ENCODE measurements at regions of chr9 and their contacts with region 1.

Region 1: GRCh38 chr9:108239696-108240321 is 616.0 kb downstream of the ACTL7B start:
- DNase-seq: no peak
- H3K4me3 ChIP-seq: no peak overlapping the region
- H3K27ac ChIP-seq: no peak overlapping the region
- H3K4me1 ChIP-seq: no peaks in the 10 kb centered on the region
- H3K27me3 ChIP-seq: no peaks in the 10 kb centered on the region
- CTCF ChIP-seq: no peak
- EP300 ChIP-seq: no peak
- POLR2A ChIP-seq: no peak

Region 2: GRCh38 chr9:107693625-107694326 is 546.0 kb before region 1 on chr9:
- in situ Hi-C with region 1: loop called in 1 of 4 experiments (anchors 10 kb)
- intact Hi-C with region 1: no loop called
- DNase-seq: no peak
- H3K4me3 ChIP-seq: no peak overlapping the region
- H3K27ac ChIP-seq: no peak overlapping the region
- H3K4me1 ChIP-seq: no peaks in the 10 kb centered on the region
- H3K27me3 ChIP-seq: no peaks in the 10 kb centered on the region
- CTCF ChIP-seq: no peak
- EP300 ChIP-seq: no peak
- POLR2A ChIP-seq: no peak

Region 3: DNA sequence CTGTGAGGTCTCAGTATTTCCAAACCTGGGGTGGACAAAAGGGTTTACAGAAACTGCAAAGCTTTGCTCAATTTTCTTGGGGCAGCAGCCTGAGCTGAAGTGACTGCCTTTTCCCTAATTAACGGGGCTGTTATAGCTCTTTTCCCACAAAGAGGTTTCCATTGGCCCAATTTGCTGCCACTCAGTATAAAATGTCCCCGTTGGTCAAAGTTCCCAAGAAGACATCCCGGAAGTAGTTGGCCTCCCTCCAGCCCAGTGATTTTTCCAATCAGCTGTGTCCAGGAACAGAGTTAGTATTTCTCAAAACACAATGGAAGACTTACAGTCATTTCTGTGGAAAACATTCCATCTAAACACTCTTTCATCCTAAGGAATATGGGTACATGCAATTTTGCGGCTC is 27.6 kb before region 1 on chr9:
- in situ Hi-C with region 1: no loop called
- intact Hi-C with region 1: no loop called
- DNase-seq: peak; percentile 9
- H3K4me3 ChIP-seq: no peak overlapping the region
- H3K27ac ChIP-seq: no peak overlapping the region
- H3K4me1 ChIP-seq: peaks cover 4 to 41% (median 24%) of the 10 kb centered on the region in 4 donors
- H3K27me3 ChIP-seq: no peaks in the 10 kb centered on the region
- CTCF ChIP-seq: no peak
- EP300 ChIP-seq: no peak
- POLR2A ChIP-seq: no peak